Breast epithelium (tissue), 4 donors: ENCODE measurements at regions of chr3 and their contacts with region 1.

Region 1: GRCh38 chr3:122484985-122485384 is 29.8 kb downstream of the KPNA1 start:
- DNase-seq: no peak
- H3K4me3 ChIP-seq: no peak overlapping the region
- H3K27ac ChIP-seq: no peak overlapping the region
- H3K4me1 ChIP-seq: no peaks in the 10 kb centered on the region
- H3K27me3 ChIP-seq: no peaks in the 10 kb centered on the region
- CTCF ChIP-seq: no peak
- POLR2A ChIP-seq: no peak

Region 2: GRCh38 chr3:121660356-121661171 is 824.4 kb before region 1 on chr3 and contains the start of gene HCLS1:
- intact Hi-C with region 1: no loop called
- DNase-seq: no peak
- H3K4me3 ChIP-seq: peak within 1 kb of the TSS; percentile 20 to 52 (median 32)
- H3K27ac ChIP-seq: peak within 1 kb of the TSS; percentile 6 to 73
- H3K4me1 ChIP-seq: no peaks in the 10 kb centered on the region
- H3K27me3 ChIP-seq: no peaks in the 10 kb centered on the region
- CTCF ChIP-seq: no peak
- POLR2A ChIP-seq: no peak
- total RNA-seq, gene HCLS1: 37.8 to 144 (median 42.6) TPM

Region 3: GRCh38 chr3:122497425-122497824 is 12.4 kb after region 1 on chr3:
- intact Hi-C with region 1: loop called (anchors 2 kb)
- DNase-seq: no peak
- H3K4me3 ChIP-seq: no peak overlapping the region
- H3K27ac ChIP-seq: no peak overlapping the region
- H3K4me1 ChIP-seq: no peaks in the 10 kb centered on the region
- H3K27me3 ChIP-seq: no peaks in the 10 kb centered on the region
- CTCF ChIP-seq: no peak
- POLR2A ChIP-seq: no peak

Region 4: DNA sequence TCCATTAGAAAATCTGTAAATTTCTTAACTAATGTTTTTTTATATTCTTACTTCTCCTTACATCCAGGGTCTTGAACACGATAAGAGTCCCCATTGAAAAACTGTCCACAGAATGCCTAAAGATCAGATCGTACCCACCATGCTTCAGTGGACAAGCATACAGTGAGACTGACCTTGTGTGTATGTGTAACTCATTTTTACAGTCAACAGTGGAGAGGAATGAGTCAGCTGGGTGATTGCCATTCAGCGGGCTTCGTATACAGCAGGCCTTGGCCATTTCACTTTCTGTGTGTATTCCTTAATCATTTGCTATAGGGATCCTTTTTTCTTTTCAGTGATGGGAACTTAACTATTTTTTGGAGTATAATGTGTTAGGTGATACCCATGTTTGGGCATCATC is 206.2 kb after region 1 on chr3:
- intact Hi-C with region 1: loop called (anchors 5 kb)
- DNase-seq: no peak
- H3K4me3 ChIP-seq: no peak overlapping the region
- H3K27ac ChIP-seq: no peak overlapping the region
- H3K4me1 ChIP-seq: no peaks in the 10 kb centered on the region
- H3K27me3 ChIP-seq: no peaks in the 10 kb centered on the region
- CTCF ChIP-seq: no peak
- POLR2A ChIP-seq: no peak